Sigmoid colon (tissue), 7 donors: ENCODE measurements at regions of chr19 and their contacts with region 1.

Region 1: DNA sequence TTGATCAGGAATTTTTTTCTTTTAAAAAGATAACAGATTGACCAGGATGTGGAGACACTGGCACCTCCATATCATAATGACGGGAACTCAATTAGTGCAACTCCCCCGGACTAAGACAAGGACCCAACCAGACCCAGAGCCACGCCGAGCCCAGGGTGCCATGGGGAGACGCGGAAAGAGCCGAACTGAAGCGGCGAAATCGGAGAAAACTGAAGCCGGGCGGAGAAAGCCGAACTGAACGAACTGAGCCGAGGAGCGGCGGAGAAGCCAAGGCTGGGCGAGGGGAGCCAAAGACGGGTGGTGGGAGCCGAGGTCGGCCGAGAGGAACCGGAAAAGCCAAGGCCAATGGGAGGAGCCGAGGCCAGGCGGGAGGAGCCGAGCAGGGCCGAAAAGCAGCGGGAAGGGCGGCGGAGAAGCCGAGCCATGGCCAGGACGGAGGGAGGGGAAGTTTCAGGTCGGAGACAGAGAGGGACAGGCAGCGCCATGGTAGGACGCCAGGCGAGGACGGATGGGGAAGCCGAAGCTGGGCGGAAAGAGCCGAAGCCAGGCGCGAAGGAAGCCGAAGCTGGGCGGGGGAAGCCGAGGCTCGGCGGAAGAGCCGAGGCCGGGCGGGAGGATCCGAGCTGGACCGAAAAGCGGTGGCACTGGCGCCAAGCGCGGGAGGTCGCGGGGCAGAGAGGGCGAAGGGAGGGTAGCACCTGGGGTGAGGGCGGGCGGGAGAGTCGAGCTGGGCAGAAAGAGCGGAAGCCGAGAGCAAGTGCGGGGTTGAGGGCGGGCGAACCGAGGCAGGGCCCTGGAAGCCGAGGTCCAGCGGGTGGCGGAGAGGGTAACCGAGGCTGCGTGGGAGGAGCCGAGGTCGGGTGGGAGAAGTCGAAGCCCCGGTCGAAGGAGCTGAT is 29.4 kb downstream of the ZNF557 start:
- DNase-seq: peak; percentile 97
- H3K4me3 ChIP-seq: peak overlapping the region; percentile 64 to 71 (median 70)
- H3K27ac ChIP-seq: peak overlapping the region; percentile 95 to 98 (median 98)
- H3K4me1 ChIP-seq: peaks cover 0 to 14% (median 11%) of the 10 kb centered on the region in 4 donors
- H3K27me3 ChIP-seq: no peaks in the 10 kb centered on the region
- CTCF ChIP-seq: no peak
- EP300 ChIP-seq: no peak
- POLR2A ChIP-seq: peak in 1 of 2 donors; percentile 48

Region 2: DNA sequence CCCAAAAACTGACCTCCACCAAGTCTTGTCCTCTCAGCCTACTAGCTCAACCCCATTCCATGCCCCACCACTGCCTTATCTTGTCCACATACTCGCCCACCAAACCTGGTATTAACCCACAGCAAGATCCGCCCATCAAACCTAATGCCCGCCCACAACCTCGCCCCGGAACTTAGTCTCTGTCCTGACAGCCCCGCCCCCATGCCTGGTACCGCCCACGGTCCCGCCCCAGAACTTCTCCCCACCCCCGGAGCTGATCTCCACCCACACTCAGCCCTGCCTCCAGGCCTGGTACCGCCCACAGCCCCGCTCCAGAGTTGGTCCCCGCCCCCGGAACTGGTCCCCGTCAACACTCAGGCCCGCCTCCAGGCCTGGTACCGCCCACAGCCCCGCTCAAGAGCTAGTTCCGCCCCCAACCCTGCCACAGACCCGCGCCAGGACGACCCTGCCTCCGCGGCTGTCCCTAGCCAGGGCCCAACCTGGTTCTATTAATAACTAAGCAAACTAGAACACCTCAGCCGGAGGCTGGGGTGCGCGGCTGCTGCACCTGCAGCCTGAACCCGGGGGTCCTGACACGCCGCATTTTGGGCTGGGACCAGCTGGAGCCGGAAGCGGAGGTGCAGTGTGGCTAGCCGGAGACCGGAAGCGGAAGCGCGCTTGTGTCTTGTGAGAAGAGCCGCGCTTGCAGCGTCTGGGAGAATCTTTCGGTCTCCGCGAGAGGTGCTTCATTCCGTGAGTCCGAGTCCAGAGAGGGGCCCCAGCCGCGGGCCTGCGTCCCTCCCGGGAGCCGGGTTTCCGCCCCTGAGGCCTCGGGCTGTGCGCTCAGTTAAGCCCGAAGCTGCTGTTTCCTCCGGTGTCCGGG is 29.7 kb before region 1 on chr19 and contains the start of gene ZNF557:
- intact Hi-C with region 1: loop called (anchors 2 kb)
- DNase-seq: peak; percentile 99
- H3K4me3 ChIP-seq: peak within 1 kb of the TSS; percentile 76 to 97 (median 90)
- H3K27ac ChIP-seq: peak within 1 kb of the TSS; percentile 78 to 84 (median 82)
- H3K4me1 ChIP-seq: peaks cover 0 to 14% (median 9%) of the 10 kb centered on the region in 4 donors
- H3K27me3 ChIP-seq: no peaks in the 10 kb centered on the region
- CTCF ChIP-seq: no peak
- EP300 ChIP-seq: no peak
- POLR2A ChIP-seq: no peak
- total RNA-seq, gene ZNF557: 6.9 to 10.0 (median 8.8) TPM

Region 3: DNA sequence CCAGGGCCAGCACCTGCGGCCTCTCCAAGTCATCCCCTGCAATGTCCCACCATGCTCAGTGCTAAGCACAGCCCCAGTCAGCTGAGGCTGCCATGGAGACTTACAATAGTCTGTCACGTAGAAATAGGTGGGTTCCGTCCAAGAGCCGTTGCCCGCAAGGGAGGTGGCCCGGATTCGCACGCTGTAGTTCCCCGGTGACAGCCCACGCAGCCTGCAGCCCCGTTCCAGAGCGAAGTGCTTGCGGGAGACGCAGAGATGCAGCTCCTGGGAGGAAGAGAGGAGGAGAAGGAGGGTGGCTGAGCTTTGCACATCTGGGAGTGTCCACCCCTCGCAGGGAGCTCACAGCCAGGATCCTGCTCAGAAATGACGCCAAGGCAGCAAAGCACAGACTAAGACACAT is 33.1 kb after region 1 on chr19:
- intact Hi-C with region 1: no loop called
- DNase-seq: peak; percentile 40
- H3K4me3 ChIP-seq: no peak overlapping the region
- H3K27ac ChIP-seq: no peak overlapping the region
- H3K4me1 ChIP-seq: peaks cover 0 to 8% (median 0%) of the 10 kb centered on the region in 4 donors
- H3K27me3 ChIP-seq: no peaks in the 10 kb centered on the region
- CTCF ChIP-seq: no peak
- EP300 ChIP-seq: no peak
- POLR2A ChIP-seq: no peak

Region 4: DNA sequence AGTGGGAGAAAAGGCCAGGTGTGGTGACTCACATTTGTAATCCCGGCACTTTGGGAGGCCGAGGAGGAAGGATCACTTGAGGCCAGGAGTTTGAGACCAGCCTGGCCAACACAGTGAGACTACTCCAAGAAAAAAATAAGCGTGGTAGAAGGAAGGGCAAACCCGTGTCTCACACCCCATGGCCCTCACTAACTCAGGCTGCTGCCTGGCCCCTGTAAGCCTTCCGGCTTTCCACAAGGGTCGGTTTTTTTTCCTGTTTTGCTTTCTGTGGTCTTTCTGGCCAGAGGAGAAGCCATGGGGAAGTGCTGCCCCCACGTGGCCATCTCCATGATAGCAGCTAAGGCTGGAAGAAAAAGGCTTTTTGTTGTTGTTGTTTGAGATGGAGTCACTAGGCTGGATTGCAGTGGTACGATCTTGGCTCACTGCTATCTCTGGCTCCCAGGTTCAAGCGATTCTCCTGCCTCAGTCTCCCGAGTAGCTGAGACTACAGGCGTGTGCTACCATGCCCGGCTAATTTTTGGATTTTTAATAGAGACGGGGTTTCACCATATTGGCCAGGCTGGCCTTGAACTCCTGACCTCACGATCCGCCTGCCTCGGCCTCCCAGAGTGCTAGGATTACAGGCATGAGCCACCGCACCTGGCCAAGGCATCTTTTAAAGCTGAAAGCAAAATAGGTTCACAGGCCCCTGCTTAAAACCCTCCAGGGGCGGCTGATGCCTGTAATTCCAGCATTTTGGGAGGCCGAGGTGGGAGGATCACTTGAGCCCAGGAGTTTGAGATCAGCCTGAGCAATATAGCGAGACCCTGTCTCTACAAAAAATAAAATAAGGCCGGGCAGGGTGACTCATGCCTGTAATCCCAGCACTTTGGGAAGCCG is 242.2 kb after region 1 on chr19:
- intact Hi-C with region 1: loop called (anchors 1 kb)
- DNase-seq: peak; percentile 89
- H3K4me3 ChIP-seq: no peak overlapping the region
- H3K27ac ChIP-seq: no peak overlapping the region
- H3K4me1 ChIP-seq: peaks cover 0 to 8% (median 0%) of the 10 kb centered on the region in 4 donors
- H3K27me3 ChIP-seq: no peaks in the 10 kb centered on the region
- CTCF ChIP-seq: peak; percentile 91 to 94 (median 94)
- EP300 ChIP-seq: no peak
- POLR2A ChIP-seq: no peak